ENCODE measurements at regions of chr1 and their contacts with region 1.

Region 1: DNA sequence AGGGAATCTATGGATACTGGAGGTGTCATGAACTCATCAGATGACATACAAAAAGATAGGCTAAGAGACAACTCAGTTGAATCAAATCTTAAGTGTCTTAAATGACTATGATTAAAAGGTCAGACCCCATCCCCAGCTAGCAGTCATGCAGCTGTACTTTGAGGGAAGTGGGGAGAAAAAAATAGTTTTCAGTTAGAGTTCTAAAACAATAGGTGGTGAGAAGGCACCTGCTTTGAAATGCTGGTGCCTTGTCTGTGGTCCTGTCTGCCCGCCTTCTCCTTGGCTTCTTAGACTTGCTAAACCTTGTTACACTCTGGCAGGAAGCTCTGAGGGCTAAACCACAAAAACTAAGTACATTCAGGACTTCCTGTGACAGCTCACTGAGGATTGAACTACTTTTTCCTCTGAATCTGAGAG is 15.3 kb downstream of the CD2 start:
- DNase-seq: peak; percentile 88
- H3K4me3 Mint-ChIP-seq: peak overlapping the region; percentile 100
- H3K27ac Mint-ChIP-seq: peak overlapping the region; percentile 100
- H3K4me1 Mint-ChIP-seq: peaks cover 90% of the 10 kb centered on the region
- H3K27me3 Mint-ChIP-seq: no peaks in the 10 kb centered on the region

Region 2: GRCh38 chr1:116724765-116725375 is 44.7 kb before region 1 on chr1:
- CTCF ChIA-PET with region 1: interaction called, 12 read pairs
- intact Hi-C with region 1: loop called (anchors 1 kb)
- DNase-seq: peak; percentile 94
- H3K4me3 Mint-ChIP-seq: no peak overlapping the region
- H3K27ac Mint-ChIP-seq: no peak overlapping the region
- H3K4me1 Mint-ChIP-seq: peaks cover 26% of the 10 kb centered on the region
- H3K27me3 Mint-ChIP-seq: no peaks in the 10 kb centered on the region

Region 3: GRCh38 chr1:116794804-116795481 is 25.4 kb after region 1 on chr1:
- CTCF ChIA-PET with region 1: interaction called, 19 read pairs
- intact Hi-C with region 1: no loop called
- DNase-seq: no peak
- H3K4me3 Mint-ChIP-seq: no peak overlapping the region
- H3K27ac Mint-ChIP-seq: no peak overlapping the region
- H3K4me1 Mint-ChIP-seq: peaks cover 46% of the 10 kb centered on the region
- H3K27me3 Mint-ChIP-seq: no peaks in the 10 kb centered on the region

Region 4: GRCh38 chr1:116817582-116818064 is 48.1 kb after region 1 on chr1:
- CTCF ChIA-PET with region 1: interaction called, 72 read pairs
- intact Hi-C with region 1: loop called (anchors 1 kb)
- DNase-seq: peak; percentile 91
- H3K4me3 Mint-ChIP-seq: no peak overlapping the region
- H3K27ac Mint-ChIP-seq: peak overlapping the region; percentile 98
- H3K4me1 Mint-ChIP-seq: peaks cover 66% of the 10 kb centered on the region
- H3K27me3 Mint-ChIP-seq: no peaks in the 10 kb centered on the region

Region 5: GRCh38 chr1:116847688-116848531 is 78.3 kb after region 1 on chr1:
- CTCF ChIA-PET with region 1: no interaction called
- intact Hi-C with region 1: loop called (anchors 1 kb)
- DNase-seq: peak; percentile 62
- H3K4me3 Mint-ChIP-seq: no peak overlapping the region
- H3K27ac Mint-ChIP-seq: peak overlapping the region; percentile 51
- H3K4me1 Mint-ChIP-seq: peaks cover 37% of the 10 kb centered on the region
- H3K27me3 Mint-ChIP-seq: no peaks in the 10 kb centered on the region

Region 6: DNA sequence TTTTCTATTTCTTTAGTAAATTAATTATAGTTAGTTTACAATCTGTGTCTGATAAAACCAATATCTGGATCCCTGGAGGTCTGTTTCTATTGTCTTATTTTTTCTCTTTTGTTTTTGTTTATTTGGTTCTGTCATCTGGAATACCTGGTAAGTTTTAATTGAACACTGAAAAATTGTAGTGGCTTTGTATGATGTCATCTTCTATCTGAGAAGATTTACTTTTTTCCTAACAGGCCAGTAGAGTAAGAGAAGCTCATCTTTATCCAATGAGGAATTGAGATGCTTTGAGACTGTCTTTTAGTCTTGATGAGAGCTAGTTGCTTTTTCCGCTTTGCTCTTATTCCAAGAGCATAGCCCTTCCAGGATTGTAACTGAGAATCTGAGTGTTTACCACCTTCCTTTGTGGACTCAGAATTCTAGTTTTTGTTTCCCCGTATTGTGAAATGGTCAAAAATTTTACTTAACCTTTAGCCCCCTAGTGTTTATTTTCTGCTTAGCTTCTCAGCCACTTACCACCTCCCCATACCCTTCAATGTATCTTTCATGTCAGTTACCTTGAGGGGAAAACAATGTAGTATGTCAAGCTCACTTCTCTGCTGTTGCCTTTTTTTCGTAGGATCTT is 165.1 kb after region 1 on chr1:
- CTCF ChIA-PET with region 1: interaction called, 5 read pairs
- intact Hi-C with region 1: loop called (anchors 1 kb)
- DNase-seq: no peak
- H3K4me3 Mint-ChIP-seq: no peak overlapping the region
- H3K27ac Mint-ChIP-seq: no peak overlapping the region
- H3K4me1 Mint-ChIP-seq: peaks cover 18% of the 10 kb centered on the region
- H3K27me3 Mint-ChIP-seq: no peaks in the 10 kb centered on the region

Measured in activated naive CD4-positive, alpha-beta T cell treated with anti-CD3 and anti-CD28 coated beads for 36 hours (primary cell).